HCT116 (cell line): ENCODE measurements at regions of chr1 and their contacts with region 1.

Region 1: GRCh38 chr1:236103646-236104218 is 38.6 kb upstream of the GPR137B start:
- DNase-seq: no peak
- ATAC-seq: peak; percentile 58
- H3K4me3 ChIP-seq: no peak overlapping the region
- H3K27ac ChIP-seq: no peak overlapping the region
- H3K4me1 ChIP-seq: peaks cover 3 to 21% of the 10 kb centered on the region in 2 experiments; a peak in 3 of 4 replicates
- H3K27me3 ChIP-seq: no peaks in the 10 kb centered on the region
- CTCF ChIP-seq: peak; percentile 63 to 84 (median 79)
- POLR2A ChIP-seq: no peak
- RAD21 ChIP-seq: peak; percentile 94

Region 2: DNA sequence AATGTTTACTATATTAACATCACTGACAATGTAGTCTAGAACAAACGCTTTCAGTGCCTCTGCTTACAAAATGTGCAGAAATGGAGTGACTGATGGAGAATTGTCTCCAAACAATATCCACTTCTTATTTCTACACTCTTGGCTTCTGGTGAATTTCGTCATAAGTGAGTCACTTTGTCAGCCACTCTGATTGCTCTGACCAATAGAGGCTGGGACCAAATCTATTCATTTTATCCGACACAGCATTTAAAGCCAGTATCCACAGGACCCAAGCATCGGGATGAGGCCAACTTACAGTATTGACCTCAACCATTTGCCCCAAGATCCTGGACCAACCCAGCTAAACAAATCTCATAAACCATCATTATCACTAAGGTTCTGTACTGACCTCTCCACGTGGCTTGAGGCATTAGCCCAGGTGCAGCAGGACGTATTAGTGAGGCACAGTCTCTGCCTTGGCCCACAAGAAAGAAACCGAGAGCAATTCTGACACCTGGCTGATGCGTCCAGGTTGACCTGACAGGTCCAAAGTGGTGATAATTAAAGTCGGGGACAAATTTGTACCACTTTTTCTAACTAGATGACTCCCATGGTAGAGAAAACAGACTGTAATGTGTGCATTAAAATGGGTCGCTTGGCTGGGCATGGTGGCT is 231.3 kb after region 1 on chr1:
- CTCF ChIA-PET with region 1: no interaction called
- POLR2A ChIA-PET with region 1: no interaction called
- RAD21 ChIA-PET with region 1: interaction called in 1 of 2 experiments, 10 read pairs
- intact Hi-C with region 1: no loop called
- DNase-seq: no peak
- ATAC-seq: no peak
- H3K4me3 ChIP-seq: no peak overlapping the region
- H3K27ac ChIP-seq: no peak overlapping the region
- H3K4me1 ChIP-seq: no peaks in the 10 kb centered on the region
- H3K27me3 ChIP-seq: no peaks in the 10 kb centered on the region
- CTCF ChIP-seq: no peak
- POLR2A ChIP-seq: no peak
- RAD21 ChIP-seq: no peak

Region 3: GRCh38 chr1:236603991-236604904 is 500.5 kb after region 1 on chr1 and contains the start of gene HEATR1:
- CTCF ChIA-PET with region 1: interaction called, 3 read pairs
- POLR2A ChIA-PET with region 1: no interaction called
- RAD21 ChIA-PET with region 1: interaction called in 1 of 2 experiments, 5 read pairs
- intact Hi-C with region 1: loop called (anchors 10 kb)
- DNase-seq: peak; percentile 91
- ATAC-seq: peak; percentile 94
- H3K4me3 ChIP-seq: peak within 1 kb of the TSS; percentile 48 to 75
- H3K27ac ChIP-seq: peak within 1 kb of the TSS; percentile 77
- H3K4me1 ChIP-seq: peaks cover 7 to 18% of the 10 kb centered on the region in 2 experiments; a peak in 3 of 4 replicates
- H3K27me3 ChIP-seq: no peaks in the 10 kb centered on the region
- CTCF ChIP-seq: no peak
- POLR2A ChIP-seq: peak; percentile 75
- RAD21 ChIP-seq: no peak
- total RNA-seq, gene HEATR1: 68.3 TPM

Region 4: DNA sequence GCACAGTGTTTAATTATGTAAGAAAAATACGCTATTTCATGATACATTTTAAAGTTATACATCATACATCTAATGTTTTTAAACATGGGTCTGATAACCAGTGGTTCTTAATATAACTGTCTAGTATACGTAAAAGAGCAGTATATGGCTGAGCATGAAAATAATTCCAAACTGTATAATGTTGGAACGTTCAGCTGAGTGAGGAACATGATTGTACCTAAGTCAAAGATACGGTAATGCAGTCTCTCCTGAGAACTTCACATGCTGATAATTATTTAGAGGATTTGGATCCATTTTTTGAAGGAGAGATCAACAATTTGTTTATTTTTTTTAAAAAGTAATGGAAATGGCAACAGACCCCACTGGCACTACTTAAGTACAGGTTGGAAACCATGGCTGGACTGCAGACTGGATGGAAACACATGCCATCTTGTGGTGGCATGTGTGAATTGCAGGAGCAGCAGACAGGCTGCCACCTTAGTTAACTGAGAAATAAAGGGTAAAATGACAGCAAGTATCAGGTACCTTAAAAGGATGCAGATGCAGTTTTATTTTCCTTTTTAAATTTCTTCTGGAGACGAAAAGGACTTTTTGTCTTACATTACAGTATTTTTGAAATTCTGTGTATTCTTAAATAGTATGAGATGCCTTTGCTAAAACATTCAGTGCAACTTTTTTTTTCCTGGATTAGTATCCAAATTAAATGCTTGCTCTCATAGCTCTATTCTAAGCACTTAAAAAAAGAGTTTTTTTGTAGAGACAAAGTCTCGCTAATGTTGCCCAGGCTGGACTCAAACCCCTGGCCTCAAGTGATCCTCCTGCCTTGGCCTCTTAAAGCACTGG is 765.1 kb after region 1 on chr1:
- CTCF ChIA-PET with region 1: no interaction called
- POLR2A ChIA-PET with region 1: no interaction called
- RAD21 ChIA-PET with region 1: no interaction called
- intact Hi-C with region 1: loop called (anchors 5 kb)
- DNase-seq: peak; percentile 51
- ATAC-seq: peak; percentile 95
- H3K4me3 ChIP-seq: no peak overlapping the region
- H3K27ac ChIP-seq: no peak overlapping the region
- H3K4me1 ChIP-seq: no peaks in the 10 kb centered on the region
- H3K27me3 ChIP-seq: no peaks in the 10 kb centered on the region
- CTCF ChIP-seq: peak; percentile 71 to 96 (median 93); a peak in 5 of 6 replicates
- POLR2A ChIP-seq: no peak
- RAD21 ChIP-seq: peak; percentile 76

Region 5: GRCh38 chr1:237386362-237387143 is 1282.8 kb after region 1 on chr1:
- CTCF ChIA-PET with region 1: interaction called, 4 read pairs
- POLR2A ChIA-PET with region 1: no interaction called
- RAD21 ChIA-PET with region 1: no interaction called
- intact Hi-C with region 1: loop called (anchors 1 kb)
- DNase-seq: peak; percentile 7
- ATAC-seq: no peak; the same call in 1 of the 2 replicates
- H3K4me3 ChIP-seq: no peak overlapping the region
- H3K27ac ChIP-seq: no peak overlapping the region
- H3K4me1 ChIP-seq: no peaks in the 10 kb centered on the region
- H3K27me3 ChIP-seq: no peaks in the 10 kb centered on the region
- CTCF ChIP-seq: peak; percentile 30 to 67 (median 48); a peak in 5 of 6 replicates
- POLR2A ChIP-seq: no peak
- RAD21 ChIP-seq: peak; percentile 64